Endothelial cell of umbilical vein (primary cell): ENCODE measurements at regions of chr5 and their contacts with region 1.

Region 1: GRCh38 chr5:132386644-132387286 is 17.3 kb downstream of the SLC22A5 start:
- DNase-seq: peak; percentile 77
- H3K4me3 ChIP-seq: no peak overlapping the region
- H3K27ac ChIP-seq: peak overlapping the region; percentile 99
- H3K4me1 ChIP-seq: peaks cover 48% of the 10 kb centered on the region
- H3K27me3 ChIP-seq: no peaks in the 10 kb centered on the region
- CTCF ChIP-seq: peak; percentile 80 to 90
- POLR2A ChIP-seq: no peak

Region 2: DNA sequence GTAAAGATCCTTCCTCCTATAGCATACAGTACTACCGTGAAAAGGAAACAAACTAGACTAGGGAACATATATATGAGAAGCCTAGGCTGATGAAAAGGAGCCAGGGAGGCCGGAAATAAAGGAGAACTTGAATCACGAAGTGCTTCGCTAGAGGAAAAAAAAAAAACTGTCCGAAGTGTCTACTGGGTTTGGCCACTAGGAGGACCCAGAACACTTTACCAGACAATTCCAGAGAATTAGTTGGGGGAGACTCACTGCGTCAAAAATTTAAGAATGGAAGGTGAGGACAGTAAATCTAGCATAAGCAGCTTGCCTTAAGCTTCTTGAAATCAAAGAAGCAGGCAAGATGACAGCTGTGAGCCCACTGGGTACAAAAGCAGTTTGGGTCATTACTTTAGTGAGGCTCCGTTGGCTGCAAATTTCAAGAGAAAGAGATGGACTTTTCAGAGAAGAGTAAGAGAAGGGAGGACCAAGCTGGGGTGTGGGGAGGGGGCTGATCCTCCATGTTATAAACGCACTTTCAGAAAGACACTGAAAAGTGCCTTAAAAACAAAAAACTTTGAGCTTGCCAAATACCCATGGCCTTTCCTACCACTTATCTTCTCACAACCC is 206.5 kb before region 1 on chr5:
- CTCF ChIA-PET with region 1: no interaction called
- POLR2A ChIA-PET with region 1: no interaction called
- dilution Hi-C with region 1: no loop called
- intact Hi-C with region 1: loop called (anchors 1 kb)
- DNase-seq: peak; percentile 78
- H3K4me3 ChIP-seq: no peak overlapping the region
- H3K27ac ChIP-seq: no peak overlapping the region
- H3K4me1 ChIP-seq: peaks cover 16% of the 10 kb centered on the region
- H3K27me3 ChIP-seq: no peaks in the 10 kb centered on the region
- CTCF ChIP-seq: peak; percentile 70 to 74
- POLR2A ChIP-seq: no peak

Region 3: GRCh38 chr5:132227485-132228240 is 159.1 kb before region 1 on chr5 and contains the start of gene P4HA2:
- CTCF ChIA-PET with region 1: no interaction called
- POLR2A ChIA-PET with region 1: no interaction called
- dilution Hi-C with region 1: no loop called
- intact Hi-C with region 1: no loop called
- DNase-seq: peak; percentile 71
- H3K4me3 ChIP-seq: peak within 1 kb of the TSS; percentile 44 to 61 (median 46)
- H3K27ac ChIP-seq: peak within 1 kb of the TSS; percentile 28
- H3K4me1 ChIP-seq: no peaks in the 10 kb centered on the region
- H3K27me3 ChIP-seq: peaks cover 0 to 1% of the 10 kb centered on the region in 2 experiments
- CTCF ChIP-seq: no peak
- POLR2A ChIP-seq: peak; percentile 56
- total RNA-seq, gene P4HA2: 37.4 and 37.6 TPM in 2 replicates

Region 4: DNA sequence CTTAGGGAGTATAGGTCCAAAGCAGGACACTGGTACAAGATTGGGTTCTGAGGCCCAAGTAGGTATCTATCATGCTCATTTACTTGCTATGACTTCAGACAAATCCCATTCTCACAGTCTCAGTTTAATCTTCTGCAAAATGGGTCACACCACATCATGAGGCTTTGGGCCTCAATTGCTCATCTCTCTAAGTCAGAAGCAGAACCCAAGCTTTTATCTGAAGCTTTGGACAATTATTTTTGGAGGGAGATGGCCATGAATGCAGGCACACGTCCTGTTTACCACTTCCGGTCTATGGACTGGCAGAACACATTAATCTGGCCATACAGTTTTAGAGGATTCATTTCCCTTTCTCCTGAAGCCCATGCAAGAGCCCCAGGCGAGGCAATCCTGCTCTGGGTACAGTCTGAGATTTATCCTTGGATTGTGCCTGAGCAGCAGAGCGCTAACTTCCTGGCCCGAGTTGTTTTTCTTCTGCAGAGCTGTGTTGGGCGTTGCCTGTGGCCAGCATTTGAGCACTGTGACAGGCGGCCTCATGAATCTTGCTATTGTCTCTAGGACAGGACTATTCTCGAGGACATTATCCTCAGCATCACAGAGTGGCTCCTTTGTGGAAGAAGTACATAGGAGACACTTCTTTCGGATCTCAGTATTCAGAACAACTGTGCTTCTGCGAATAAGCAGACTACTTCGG is 76.5 kb before region 1 on chr5:
- CTCF ChIA-PET with region 1: no interaction called
- POLR2A ChIA-PET with region 1: no interaction called
- dilution Hi-C with region 1: no loop called
- intact Hi-C with region 1: no loop called
- DNase-seq: peak; percentile 18
- H3K4me3 ChIP-seq: no peak overlapping the region
- H3K27ac ChIP-seq: no peak overlapping the region
- H3K4me1 ChIP-seq: peaks cover 4% of the 10 kb centered on the region
- H3K27me3 ChIP-seq: no peaks in the 10 kb centered on the region
- CTCF ChIP-seq: no peak
- POLR2A ChIP-seq: no peak

Region 5: GRCh38 chr5:132410451-132411381 is 24.0 kb after region 1 on chr5:
- CTCF ChIA-PET with region 1: interaction called, 59 read pairs
- POLR2A ChIA-PET with region 1: no interaction called
- dilution Hi-C with region 1: no loop called
- intact Hi-C with region 1: loop called (anchors 1 kb)
- DNase-seq: peak; percentile 79
- H3K4me3 ChIP-seq: peak overlapping the region; percentile 69 to 77 (median 76)
- H3K27ac ChIP-seq: peak overlapping the region; percentile 92
- H3K4me1 ChIP-seq: peaks cover 46% of the 10 kb centered on the region
- H3K27me3 ChIP-seq: no peaks in the 10 kb centered on the region
- CTCF ChIP-seq: peak; percentile 72 to 82
- POLR2A ChIP-seq: peak; percentile 48

Region 6: DNA sequence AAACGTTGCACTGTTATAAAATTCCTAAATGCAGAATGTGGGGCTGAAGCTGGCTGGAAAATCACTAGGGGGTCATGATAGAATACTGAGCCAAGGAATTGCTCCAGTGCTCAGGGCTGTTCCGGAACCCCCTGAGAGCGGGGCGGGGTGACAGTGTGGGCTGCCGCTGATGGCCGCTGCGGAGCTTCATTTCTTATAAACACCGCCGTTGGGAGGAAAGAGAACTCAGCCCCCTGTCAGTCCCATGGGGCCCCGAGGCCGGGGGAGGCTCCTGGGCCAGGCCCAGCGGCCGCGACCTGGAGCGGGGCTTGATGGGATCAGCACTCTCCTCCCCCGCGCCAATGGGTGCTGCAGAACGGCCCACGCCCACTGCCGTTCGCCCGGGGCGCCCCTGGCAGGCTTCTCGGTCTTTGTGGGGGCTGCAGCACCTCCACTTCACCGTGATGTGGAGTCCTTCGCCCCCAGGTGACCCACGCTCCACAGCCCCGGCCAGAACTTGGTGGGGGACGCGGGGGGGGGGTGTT is 109.0 kb after region 1 on chr5:
- CTCF ChIA-PET with region 1: interaction called, 220 read pairs
- POLR2A ChIA-PET with region 1: interaction called, 14 read pairs
- dilution Hi-C with region 1: no loop called
- intact Hi-C with region 1: loop called (anchors 1 kb)
- DNase-seq: peak; percentile 50
- H3K4me3 ChIP-seq: peak overlapping the region; percentile 11 to 39 (median 30)
- H3K27ac ChIP-seq: peak overlapping the region; percentile 56
- H3K4me1 ChIP-seq: peaks cover 30% of the 10 kb centered on the region
- H3K27me3 ChIP-seq: no peaks in the 10 kb centered on the region
- CTCF ChIP-seq: no peak
- POLR2A ChIP-seq: peak; percentile 50

Region 7: DNA sequence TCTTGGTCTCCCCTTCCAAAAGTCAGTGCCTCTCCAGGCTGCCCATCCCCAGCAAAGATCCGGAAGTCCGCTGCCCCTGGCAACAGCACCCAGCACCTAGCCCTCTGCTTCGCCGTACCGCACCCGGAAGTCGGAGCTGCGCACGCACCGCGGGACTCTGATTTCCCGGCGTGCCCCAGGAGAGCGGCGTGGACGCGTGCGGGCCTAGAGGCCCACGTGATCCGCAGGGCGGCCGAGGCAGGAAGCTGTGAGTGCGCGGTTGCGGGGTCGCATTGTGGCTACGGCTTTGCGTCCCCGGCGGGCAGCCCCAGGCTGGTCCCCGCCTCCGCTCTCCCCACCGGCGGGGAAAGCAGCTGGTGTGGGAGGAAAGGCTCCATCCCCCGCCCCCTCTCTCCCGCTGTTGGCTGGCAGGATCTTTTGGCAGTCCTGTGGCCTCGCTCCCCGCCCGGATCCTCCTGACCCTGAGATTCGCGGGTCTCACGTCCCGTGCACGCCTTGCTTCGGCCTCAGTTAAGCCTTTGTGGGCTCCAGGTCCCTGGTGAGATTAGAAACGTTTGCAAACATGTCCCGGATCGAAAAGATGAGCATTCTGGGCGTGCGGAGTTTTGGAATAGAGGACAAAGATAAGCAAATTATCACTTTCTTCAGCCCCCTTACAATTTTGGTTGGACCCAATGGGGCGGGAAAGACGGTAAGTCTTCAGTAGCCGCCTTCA is 170.2 kb after region 1 on chr5 and contains the start of gene RAD50:
- CTCF ChIA-PET with region 1: no interaction called
- POLR2A ChIA-PET with region 1: no interaction called
- dilution Hi-C with region 1: no loop called
- intact Hi-C with region 1: loop called (anchors 1 kb)
- DNase-seq: peak; percentile 83
- H3K4me3 ChIP-seq: peak within 1 kb of the TSS; percentile 63 to 90 (median 64)
- H3K27ac ChIP-seq: peak within 1 kb of the TSS; percentile 69
- H3K4me1 ChIP-seq: peaks cover 15% of the 10 kb centered on the region
- H3K27me3 ChIP-seq: no peaks in the 10 kb centered on the region
- CTCF ChIP-seq: no peak
- POLR2A ChIP-seq: peak; percentile 88
- total RNA-seq, gene RAD50: 18.7 and 20.4 TPM in 2 replicates

Region 8: GRCh38 chr5:132820162-132820754 is 433.5 kb after region 1 on chr5:
- CTCF ChIA-PET with region 1: interaction called, 37 read pairs
- POLR2A ChIA-PET with region 1: no interaction called
- dilution Hi-C with region 1: no loop called
- intact Hi-C with region 1: loop called (anchors 1 kb)
- DNase-seq: peak; percentile 87
- H3K4me3 ChIP-seq: no peak overlapping the region
- H3K27ac ChIP-seq: no peak overlapping the region
- H3K4me1 ChIP-seq: peaks cover 2% of the 10 kb centered on the region
- H3K27me3 ChIP-seq: no peaks in the 10 kb centered on the region
- CTCF ChIP-seq: peak; percentile 78 to 91
- POLR2A ChIP-seq: no peak

Region 9: DNA sequence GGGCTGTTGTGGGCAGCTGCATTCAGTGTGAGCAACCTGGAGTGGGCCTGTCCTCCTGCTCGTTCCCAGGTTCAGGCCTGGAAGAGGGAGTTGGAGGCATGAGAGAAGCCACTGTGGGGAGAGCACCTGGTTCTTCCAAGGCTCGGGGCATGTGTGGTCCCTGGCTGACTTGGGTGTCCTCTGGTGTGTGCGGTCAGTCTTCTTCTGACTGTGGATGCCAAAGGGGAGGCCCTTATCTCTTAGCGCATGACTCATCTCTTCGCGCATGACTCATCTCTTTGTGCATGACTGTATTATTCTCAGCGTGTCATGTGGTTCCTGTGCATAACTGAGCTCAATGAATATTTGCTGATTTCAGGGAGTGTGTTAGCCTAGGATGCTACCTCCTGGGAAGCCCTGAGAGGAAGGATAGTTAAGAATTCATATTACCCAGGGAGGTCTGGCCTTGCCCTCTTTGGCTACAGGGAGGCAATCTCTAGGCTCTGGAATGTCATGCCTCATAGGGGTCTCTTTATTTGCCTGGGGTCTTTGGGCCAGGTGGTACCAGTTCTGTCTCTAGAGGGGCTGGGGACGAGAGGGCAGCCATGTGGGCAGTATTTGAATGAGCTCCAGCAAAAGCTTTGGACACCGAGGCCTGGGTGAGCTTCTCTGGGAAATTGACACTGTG is 853.8 kb after region 1 on chr5:
- CTCF ChIA-PET with region 1: no interaction called
- POLR2A ChIA-PET with region 1: no interaction called
- dilution Hi-C with region 1: no loop called
- intact Hi-C with region 1: loop called (anchors 10 kb)
- DNase-seq: peak; percentile 95
- H3K4me3 ChIP-seq: no peak overlapping the region
- H3K27ac ChIP-seq: peak overlapping the region; percentile 77
- H3K4me1 ChIP-seq: peaks cover 27% of the 10 kb centered on the region
- H3K27me3 ChIP-seq: no peaks in the 10 kb centered on the region
- CTCF ChIP-seq: no peak
- POLR2A ChIP-seq: peak; percentile 49